GM23248 (cell line): ENCODE measurements at regions of chr17 and their contacts with region 1.

Region 1: DNA sequence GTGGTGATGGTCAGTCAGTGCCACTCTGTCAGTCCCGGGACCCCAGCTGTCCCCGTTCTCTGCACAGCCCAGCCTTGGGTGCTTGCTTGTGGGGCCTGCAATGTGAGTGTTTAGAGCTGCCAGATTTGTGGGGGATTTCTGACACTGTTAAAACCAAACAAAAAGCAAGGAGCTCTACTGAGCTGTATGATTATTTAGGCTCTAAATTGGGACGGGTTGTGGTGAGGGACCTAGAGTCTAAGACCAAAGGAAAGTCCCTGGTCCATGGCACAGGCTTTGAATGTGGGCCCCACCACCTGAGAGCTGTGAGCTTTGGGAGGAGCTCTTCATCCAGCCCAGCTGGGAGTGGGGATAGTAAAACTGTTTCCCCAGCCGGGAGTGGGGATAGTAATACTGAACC is 63.3 kb downstream of the KSR1 start:
- DNase-seq: no peak
- H3K4me3 ChIP-seq: no peak overlapping the region
- H3K27ac ChIP-seq: no peak overlapping the region
- H3K4me1 ChIP-seq: no peaks in the 10 kb centered on the region
- H3K27me3 ChIP-seq: no peaks in the 10 kb centered on the region

Region 2: GRCh38 chr17:27455914-27456680 is 63.5 kb before region 1 on chr17 and contains the start of gene KSR1:
- in situ Hi-C with region 1: loop called (anchors 10 kb)
- DNase-seq: peak; percentile 88
- H3K4me3 ChIP-seq: peak within 1 kb of the TSS; percentile 77
- H3K27ac ChIP-seq: no peak within 1 kb of the TSS
- H3K4me1 ChIP-seq: peaks cover 13% of the 10 kb centered on the region
- H3K27me3 ChIP-seq: peaks cover 8% of the 10 kb centered on the region; the same call in 1 of the 2 replicates
- total RNA-seq, gene KSR1: 2.5 and 9.6 TPM in 2 replicates